ENCODE measurements at regions of chr1 and their contacts with region 1.

Region 1: GRCh38 chr1:113389953-113390834 is at the start of gene MAGI3:
- DNase-seq: peak; percentile 99
- H3K4me3 Mint-ChIP-seq: peak within 1 kb of the TSS; percentile 90
- H3K27ac Mint-ChIP-seq: peak within 1 kb of the TSS; percentile 74
- H3K4me1 Mint-ChIP-seq: peaks cover 28% of the 10 kb centered on the region
- H3K27me3 Mint-ChIP-seq: peaks cover 46% of the 10 kb centered on the region
- total RNA-seq, gene MAGI3: 3.7 and 3.8 TPM in 2 replicates

Region 2: DNA sequence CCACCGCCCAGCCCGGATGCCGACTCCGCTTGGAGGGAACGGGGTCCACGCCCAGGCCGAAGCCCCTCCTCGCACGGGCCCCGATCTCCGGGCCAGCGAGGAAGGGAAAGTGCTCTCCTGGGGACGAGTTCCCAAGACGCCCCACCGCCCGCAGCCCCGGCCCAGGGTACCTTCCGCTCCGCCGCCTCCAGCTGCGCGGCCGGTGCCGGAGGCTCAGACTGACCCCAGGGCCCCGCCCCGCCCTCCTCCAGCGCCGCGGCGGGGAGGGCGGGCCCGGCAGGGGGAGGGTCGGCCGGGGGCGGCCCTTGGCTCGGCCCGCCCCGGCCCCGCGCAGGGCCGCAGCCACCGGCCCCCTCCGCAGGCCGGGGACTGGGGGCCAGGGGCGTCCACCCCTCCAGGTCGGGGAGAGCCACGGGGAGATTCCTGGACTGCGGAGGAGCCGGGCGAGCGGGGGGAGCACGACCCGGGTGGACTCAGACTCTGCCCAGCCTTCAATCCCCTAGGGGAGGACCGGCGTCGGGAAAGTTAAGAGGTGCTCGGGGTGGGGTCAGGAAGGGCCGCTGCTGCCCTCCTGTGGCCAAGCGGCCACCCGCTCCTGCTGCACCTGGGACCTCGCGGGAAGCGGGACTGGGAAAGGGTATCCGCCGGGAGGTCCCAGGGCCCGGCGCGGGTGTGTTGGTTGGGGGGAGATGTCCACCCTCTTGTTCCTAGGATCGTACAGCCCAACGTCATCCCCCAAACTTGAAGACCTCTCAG is 683.1 kb before region 1 on chr1 and contains the start of gene RHOC:
- intact Hi-C with region 1: loop called (anchors 5 kb)
- DNase-seq: peak; percentile 91
- H3K4me3 Mint-ChIP-seq: peak within 1 kb of the TSS; percentile 87
- H3K27ac Mint-ChIP-seq: peak within 1 kb of the TSS; percentile 94
- H3K4me1 Mint-ChIP-seq: peaks cover 56% of the 10 kb centered on the region
- H3K27me3 Mint-ChIP-seq: peaks cover 21% of the 10 kb centered on the region
- total RNA-seq, gene RHOC: 48.5 and 53.4 TPM in 2 replicates

Region 3: DNA sequence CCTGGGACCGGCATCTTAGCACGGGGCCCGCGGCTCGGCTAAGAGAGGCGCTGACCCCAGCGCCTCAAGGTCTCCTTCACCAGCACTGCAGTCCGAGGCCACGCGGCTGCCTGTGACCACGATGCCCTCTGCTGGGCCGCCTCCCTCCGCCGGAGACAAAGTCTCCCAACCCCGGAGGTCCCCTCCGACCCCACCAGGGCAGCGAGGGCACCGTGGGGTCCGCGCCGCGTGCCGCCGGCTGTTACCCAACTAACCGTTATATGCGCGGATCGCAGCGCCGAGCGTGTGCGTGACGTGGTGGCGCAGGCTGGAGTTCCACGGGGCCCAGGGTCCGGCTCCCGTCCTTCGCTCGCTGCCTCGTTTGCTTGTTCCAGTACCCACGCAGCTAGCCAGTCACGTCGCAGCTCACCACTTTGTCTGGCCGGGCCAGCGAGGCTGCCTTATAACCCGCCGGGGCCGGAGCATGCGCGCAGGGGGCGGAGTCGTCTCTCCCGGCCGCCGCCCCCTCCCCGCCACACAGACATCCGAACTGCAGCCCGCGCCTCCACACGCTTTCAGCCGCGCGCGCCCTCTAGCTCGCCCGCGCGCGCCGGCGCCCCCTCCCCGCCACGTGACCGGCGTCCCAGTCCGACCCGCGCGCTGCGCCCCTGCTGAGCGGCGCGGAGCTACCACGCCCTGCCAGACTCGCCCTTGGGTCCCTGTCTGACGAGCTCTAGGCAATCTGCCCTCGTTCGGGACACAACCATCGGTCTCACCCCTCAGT is 434.2 kb before region 1 on chr1 and contains the start of gene SLC16A1:
- intact Hi-C with region 1: loop called (anchors 5 kb)
- DNase-seq: peak; percentile 97
- H3K4me3 Mint-ChIP-seq: peak within 1 kb of the TSS; percentile 88
- H3K27ac Mint-ChIP-seq: peak within 1 kb of the TSS; percentile 100
- H3K4me1 Mint-ChIP-seq: peaks cover 51% of the 10 kb centered on the region
- H3K27me3 Mint-ChIP-seq: no peaks in the 10 kb centered on the region
- total RNA-seq, gene SLC16A1: 79.2 and 79.7 TPM in 2 replicates

Region 4: DNA sequence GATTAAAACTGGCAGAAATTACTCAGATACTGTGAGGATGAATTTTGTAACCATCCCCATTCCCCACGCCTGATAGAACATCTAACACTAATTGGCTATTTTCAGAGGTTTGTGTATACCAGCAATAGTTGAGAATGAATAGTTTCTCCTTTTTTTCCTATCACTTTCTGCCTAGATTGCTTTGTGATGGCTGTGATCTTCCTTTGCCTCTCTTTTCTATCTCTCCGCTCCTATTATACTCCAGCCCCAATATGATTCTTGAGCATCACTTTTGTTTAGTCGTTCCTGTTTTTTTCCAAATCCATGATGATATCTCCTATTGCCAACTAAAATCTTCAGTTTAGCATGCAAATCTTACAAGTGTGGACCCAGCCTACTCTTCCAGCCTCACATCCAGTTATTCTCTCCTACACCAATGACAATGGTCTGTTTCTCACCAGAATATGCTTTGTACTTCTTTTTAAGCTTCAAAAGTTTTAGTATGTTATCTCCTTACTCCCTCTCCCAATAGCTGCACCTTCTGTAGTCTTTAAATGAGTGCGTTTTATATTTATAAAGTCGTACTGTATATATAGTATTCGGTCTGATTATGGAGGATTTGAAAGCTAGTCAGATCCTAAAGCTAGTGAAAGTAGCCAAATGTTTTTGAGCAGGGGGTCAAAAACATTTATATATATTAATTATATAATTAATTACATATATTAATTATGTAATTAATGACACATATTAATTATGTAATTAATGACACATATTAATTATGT is 25.3 kb after region 1 on chr1:
- intact Hi-C with region 1: loop called (anchors 2 kb)
- DNase-seq: no peak
- H3K4me3 Mint-ChIP-seq: no peak overlapping the region
- H3K27ac Mint-ChIP-seq: no peak overlapping the region
- H3K4me1 Mint-ChIP-seq: no peaks in the 10 kb centered on the region
- H3K27me3 Mint-ChIP-seq: no peaks in the 10 kb centered on the region

Region 5: GRCh38 chr1:113677250-113678158 is 287.3 kb after region 1 on chr1:
- intact Hi-C with region 1: loop called (anchors 10 kb)
- DNase-seq: peak; percentile 65
- H3K4me3 Mint-ChIP-seq: no peak overlapping the region
- H3K27ac Mint-ChIP-seq: no peak overlapping the region
- H3K4me1 Mint-ChIP-seq: peaks cover 10% of the 10 kb centered on the region
- H3K27me3 Mint-ChIP-seq: no peaks in the 10 kb centered on the region

Region 6: GRCh38 chr1:113759333-113760101 is 369.3 kb after region 1 on chr1 and contains the start of gene PHTF1:
- intact Hi-C with region 1: loop called (anchors 1 kb)
- DNase-seq: peak; percentile 89
- H3K4me3 Mint-ChIP-seq: peak within 1 kb of the TSS; percentile 97
- H3K27ac Mint-ChIP-seq: peak within 1 kb of the TSS; percentile 97
- H3K4me1 Mint-ChIP-seq: peaks cover 30% of the 10 kb centered on the region
- H3K27me3 Mint-ChIP-seq: no peaks in the 10 kb centered on the region
- total RNA-seq, gene PHTF1: 15.6 and 19.2 TPM in 2 replicates

Measured in activated CD4-positive, alpha-beta T cell treated with anti-CD3 and anti-CD28 coated beads, Interleukin-2, amount 10 ng/mL, durations not matched to agents 24 days and 14 days (primary cell).